HepG2 (cell line): ENCODE measurements at regions of chr1 and their contacts with region 1.

Region 1: DNA sequence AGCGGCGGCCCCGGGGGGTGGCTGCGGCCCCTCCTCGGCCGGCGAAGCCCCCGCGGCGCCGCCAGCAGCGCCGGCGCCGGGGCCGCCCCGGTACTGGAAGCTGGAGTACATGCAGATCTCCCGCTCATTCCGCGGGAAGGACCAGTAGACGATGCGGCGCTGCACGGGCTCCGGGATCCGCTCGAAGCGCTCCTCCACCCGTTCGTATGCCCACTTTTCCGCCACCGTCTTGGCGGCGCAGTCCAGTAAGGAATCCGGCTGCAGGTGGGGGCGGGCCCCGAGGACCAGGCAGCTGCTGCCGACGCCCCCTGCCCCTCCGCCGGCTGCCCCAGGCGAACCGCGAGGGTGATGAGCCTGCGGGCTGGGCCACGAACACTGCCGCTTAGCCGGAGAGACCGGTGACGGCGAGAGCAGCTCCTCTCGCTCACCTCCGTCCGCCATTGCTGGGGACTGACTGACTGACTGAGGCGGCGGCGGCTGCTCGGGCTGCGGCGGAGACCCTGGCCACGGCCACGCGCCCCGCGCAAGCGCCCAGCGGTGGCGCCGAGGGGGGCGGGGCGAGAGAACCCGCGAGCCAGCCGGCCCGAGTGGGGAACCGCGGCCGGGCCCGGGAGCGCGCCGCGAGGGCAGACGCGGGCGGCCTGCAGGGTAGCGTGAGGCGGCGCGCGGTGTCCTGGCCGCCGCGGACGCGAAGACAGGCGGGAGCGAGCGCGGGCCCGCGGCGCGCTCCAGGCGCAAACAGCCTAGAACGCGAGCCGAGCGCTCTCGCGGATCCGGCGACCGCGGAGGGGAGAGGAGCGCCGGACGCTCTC is at the start of gene ZSWIM5:
- DNase-seq: peak; percentile 48
- ATAC-seq: peak; percentile 87
- H3K4me3 ChIP-seq: peak within 1 kb of the TSS; percentile 88 to 96 (median 95)
- H3K27ac ChIP-seq: peak within 1 kb of the TSS; percentile 95
- H3K4me1 ChIP-seq: peaks cover 43% of the 10 kb centered on the region
- H3K27me3 ChIP-seq: no peaks in the 10 kb centered on the region; a peak in 1 of 5 replicates
- CTCF ChIP-seq: peak; percentile 23; the same call in 1 of the 2 replicates
- EP300 ChIP-seq: no peak
- POLR2A ChIP-seq: peak; percentile 78 to 84
- RAD21 ChIP-seq: peak; percentile 70
- total RNA-seq, gene ZSWIM5: 11.0 and 13.5 TPM in 2 replicates

Region 2: DNA sequence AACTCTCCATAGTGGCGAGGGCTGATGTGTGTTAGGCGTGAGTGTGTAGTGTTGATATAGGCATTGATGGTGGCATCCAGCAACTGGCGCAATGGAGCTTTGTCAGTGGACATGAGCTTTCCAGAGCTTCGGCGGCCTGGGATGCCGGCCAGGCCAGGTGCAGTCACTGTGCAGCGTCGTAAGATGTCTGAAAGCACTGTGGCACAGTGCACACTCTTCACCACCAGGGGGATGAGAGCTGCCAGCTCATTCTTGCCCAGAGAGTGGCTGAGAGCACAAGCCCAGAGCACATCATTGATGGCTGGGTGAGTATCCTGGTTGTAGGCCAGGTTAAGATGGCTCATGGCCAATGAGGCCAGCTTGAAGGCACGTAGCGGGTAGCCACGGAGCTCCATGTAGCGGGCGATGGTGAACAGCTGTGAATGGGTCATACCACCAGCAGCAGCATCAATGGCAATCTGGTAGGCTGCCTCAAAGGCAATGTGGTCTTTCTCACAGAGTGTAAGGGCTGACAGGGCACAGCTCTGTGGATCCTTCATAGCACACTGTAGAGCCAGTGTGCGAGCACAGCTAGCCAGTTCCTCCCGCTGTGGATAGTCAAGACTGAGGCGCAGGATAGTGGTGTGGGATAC is 187.4 kb before region 1 on chr1:
- CTCF ChIA-PET with region 1: no interaction called
- POLR2A ChIA-PET with region 1: interaction called, 3 read pairs
- in situ Hi-C with region 1: no loop called
- intact Hi-C with region 1: loop called (anchors 1 kb)
- DNase-seq: peak; percentile 47
- ATAC-seq: peak; percentile 91
- H3K4me3 ChIP-seq: no peak overlapping the region
- H3K27ac ChIP-seq: no peak overlapping the region
- H3K4me1 ChIP-seq: peaks cover 12% of the 10 kb centered on the region
- H3K27me3 ChIP-seq: no peaks in the 10 kb centered on the region
- CTCF ChIP-seq: peak; percentile 86
- EP300 ChIP-seq: no peak
- POLR2A ChIP-seq: no peak
- RAD21 ChIP-seq: peak; percentile 87

Region 3: GRCh38 chr1:45134468-45134873 is 71.6 kb before region 1 on chr1:
- CTCF ChIA-PET with region 1: no interaction called
- POLR2A ChIA-PET with region 1: no interaction called
- in situ Hi-C with region 1: no loop called
- intact Hi-C with region 1: loop called (anchors 10 kb)
- DNase-seq: peak; percentile 97
- ATAC-seq: peak; percentile 96
- H3K4me3 ChIP-seq: peak overlapping the region in 1 of 3 experiments; percentile 36; a peak in 1 of 6 replicates
- H3K27ac ChIP-seq: peak overlapping the region; percentile 77
- H3K4me1 ChIP-seq: peaks cover 55% of the 10 kb centered on the region
- H3K27me3 ChIP-seq: no peaks in the 10 kb centered on the region
- CTCF ChIP-seq: no peak
- EP300 ChIP-seq: peak in 1 of 2 experiments; percentile 97; a peak in 2 of 4 replicates
- POLR2A ChIP-seq: no peak
- RAD21 ChIP-seq: peak; percentile 21; the same call in 1 of the 2 replicates

Region 4: DNA sequence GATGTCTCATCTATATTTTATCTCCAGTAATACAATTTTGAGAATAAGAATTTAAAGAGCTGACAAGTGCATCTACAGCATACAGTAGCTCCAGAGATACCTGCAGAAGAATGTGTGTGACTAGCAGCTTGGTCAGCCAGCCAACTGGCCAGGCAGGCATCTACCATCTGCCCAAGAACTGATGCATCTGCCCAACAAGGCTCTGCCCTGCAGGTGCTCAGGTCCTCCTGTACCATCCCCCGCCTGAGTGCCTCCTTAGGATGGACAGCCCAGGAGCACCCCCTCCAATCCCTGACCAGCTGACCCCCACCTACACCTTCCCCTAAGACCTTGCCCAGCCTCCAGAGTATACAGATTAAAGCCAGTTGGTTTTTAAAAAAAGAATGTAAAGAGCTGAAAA is 512.2 kb after region 1 on chr1:
- CTCF ChIA-PET with region 1: no interaction called
- POLR2A ChIA-PET with region 1: no interaction called
- in situ Hi-C with region 1: no loop called
- intact Hi-C with region 1: no loop called
- DNase-seq: no peak
- ATAC-seq: no peak
- H3K4me3 ChIP-seq: no peak overlapping the region
- H3K27ac ChIP-seq: no peak overlapping the region
- H3K4me1 ChIP-seq: no peaks in the 10 kb centered on the region
- H3K27me3 ChIP-seq: no peaks in the 10 kb centered on the region; a peak in 1 of 5 replicates
- CTCF ChIP-seq: no peak
- EP300 ChIP-seq: no peak
- POLR2A ChIP-seq: no peak
- RAD21 ChIP-seq: no peak